ENCODE measurements at regions of chr19 and their contacts with region 1.

Region 1: GRCh38 chr19:49676690-49677231 is 310 bp upstream of the PRMT1 start:
- DNase-seq: peak; percentile 100
- ATAC-seq: peak; percentile 77
- H3K4me3 Mint-ChIP-seq: peak overlapping the region; percentile 94
- H3K27ac Mint-ChIP-seq: peak overlapping the region; percentile 99
- H3K4me1 Mint-ChIP-seq: peaks cover 39% of the 10 kb centered on the region
- H3K27me3 Mint-ChIP-seq: no peaks in the 10 kb centered on the region

Region 2: GRCh38 chr19:48255376-48256303 is 1421.1 kb before region 1 on chr19 and contains the start of gene CARD8:
- CTCF ChIA-PET with region 1: no interaction called
- POLR2A ChIA-PET with region 1: no interaction called
- intact Hi-C with region 1: loop called in 1 of 2 experiments (anchors 5 kb)
- DNase-seq: peak; percentile 89
- ATAC-seq: peak; percentile 89
- H3K4me3 Mint-ChIP-seq: peak within 1 kb of the TSS; percentile 92
- H3K27ac Mint-ChIP-seq: peak within 1 kb of the TSS; percentile 98
- H3K4me1 Mint-ChIP-seq: peaks cover 63% of the 10 kb centered on the region
- H3K27me3 Mint-ChIP-seq: no peaks in the 10 kb centered on the region
- total RNA-seq, gene CARD8: 109 to 118 TPM

Region 3: GRCh38 chr19:49443366-49444099 is 233.2 kb before region 1 on chr19:
- CTCF ChIA-PET with region 1: no interaction called
- POLR2A ChIA-PET with region 1: no interaction called
- intact Hi-C with region 1: loop called in 1 of 2 experiments (anchors 2 kb)
- DNase-seq: peak; percentile 97
- ATAC-seq: peak; percentile 91
- H3K4me3 Mint-ChIP-seq: peak overlapping the region; percentile 73
- H3K27ac Mint-ChIP-seq: peak overlapping the region; percentile 83
- H3K4me1 Mint-ChIP-seq: peaks cover 33% of the 10 kb centered on the region
- H3K27me3 Mint-ChIP-seq: peaks cover 37% of the 10 kb centered on the region

Region 4: GRCh38 chr19:49497047-49497788 is 179.5 kb before region 1 on chr19:
- CTCF ChIA-PET with region 1: interaction called, 5 read pairs
- POLR2A ChIA-PET with region 1: interaction called, 11 read pairs
- intact Hi-C with region 1: loop called (anchors 1 to 2 kb)
- DNase-seq: peak; percentile 86
- ATAC-seq: peak; percentile 5
- H3K4me3 Mint-ChIP-seq: peak overlapping the region; percentile 93
- H3K27ac Mint-ChIP-seq: peak overlapping the region; percentile 98
- H3K4me1 Mint-ChIP-seq: peaks cover 47% of the 10 kb centered on the region
- H3K27me3 Mint-ChIP-seq: no peaks in the 10 kb centered on the region

Region 5: DNA sequence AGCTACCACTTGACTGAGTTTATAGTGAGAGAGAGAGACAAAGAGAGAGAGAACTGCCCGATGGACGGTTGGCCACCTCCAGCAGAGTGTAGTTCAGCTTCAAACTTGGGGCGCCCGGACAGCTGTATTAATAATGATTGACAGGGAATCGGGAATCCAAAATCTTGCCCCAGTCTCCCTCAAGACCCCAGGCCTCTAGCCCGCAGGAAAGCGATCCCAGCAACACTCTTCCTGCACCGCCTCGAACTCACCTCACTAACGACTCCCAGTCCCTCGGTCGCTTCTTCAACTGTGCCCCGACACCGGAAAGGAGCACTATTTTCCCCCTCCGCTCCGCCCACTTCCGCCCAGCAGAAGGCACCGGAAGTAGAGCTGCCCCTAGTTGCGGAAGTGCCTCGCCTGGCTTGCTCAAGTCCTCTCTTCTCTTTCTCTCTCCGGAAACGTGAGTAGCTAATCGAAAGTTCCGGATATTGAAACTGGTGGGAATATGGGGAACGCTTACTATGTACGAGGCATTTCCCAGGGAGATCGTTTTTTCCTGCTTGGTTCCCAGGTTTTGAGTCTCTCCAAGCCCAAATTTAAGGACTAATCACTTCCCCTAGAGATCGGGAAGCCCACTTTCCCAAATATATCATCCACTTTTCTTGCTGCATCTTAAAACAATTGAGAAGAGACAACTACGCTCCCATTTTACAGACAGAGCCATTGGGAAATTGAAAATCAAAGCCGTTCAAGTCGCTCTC is 96.3 kb before region 1 on chr19 and contains the start of gene NOSIP:
- CTCF ChIA-PET with region 1: interaction called, 7 read pairs
- POLR2A ChIA-PET with region 1: no interaction called
- intact Hi-C with region 1: loop called in 1 of 2 experiments (anchors 1 kb)
- DNase-seq: peak; percentile 98
- ATAC-seq: peak; percentile 97
- H3K4me3 Mint-ChIP-seq: peak within 1 kb of the TSS; percentile 92
- H3K27ac Mint-ChIP-seq: peak within 1 kb of the TSS; percentile 89
- H3K4me1 Mint-ChIP-seq: peaks cover 34% of the 10 kb centered on the region
- H3K27me3 Mint-ChIP-seq: no peaks in the 10 kb centered on the region
- total RNA-seq, gene NOSIP: 71.4 to 73.1 TPM

Region 6: DNA sequence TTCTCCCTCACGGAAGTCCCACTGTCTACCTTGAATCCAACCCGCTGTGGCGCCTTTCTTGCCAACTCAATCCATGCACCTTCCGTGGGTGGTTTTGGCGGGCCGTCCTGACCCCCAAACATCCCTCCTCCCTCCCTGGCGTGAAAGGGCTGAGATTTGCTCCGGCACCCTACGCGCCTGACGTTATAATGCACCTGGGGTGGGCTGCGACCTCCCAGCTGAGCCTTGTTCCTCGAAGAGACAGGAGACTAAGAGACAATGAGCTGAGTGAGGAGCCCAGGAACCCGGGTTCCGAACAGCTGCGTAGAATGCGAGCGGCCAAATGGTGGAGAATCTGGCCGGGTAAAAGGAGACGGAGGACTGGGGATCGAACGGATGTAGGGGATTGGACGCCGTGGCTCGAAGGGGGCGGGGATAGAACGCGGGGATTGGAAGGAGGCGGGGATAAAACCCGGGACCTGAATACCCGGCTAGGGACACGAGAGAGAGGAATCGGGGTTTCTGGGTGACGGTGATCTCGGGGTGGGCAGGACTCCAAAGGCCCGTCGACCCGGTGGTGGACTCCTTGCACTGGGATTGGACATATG is 14.0 kb after region 1 on chr19 and contains the start of gene CPT1C:
- CTCF ChIA-PET with region 1: interaction called, 10 read pairs
- POLR2A ChIA-PET with region 1: interaction called, 3 read pairs
- intact Hi-C with region 1: no loop called
- DNase-seq: peak; percentile 77
- ATAC-seq: peak; percentile 72
- H3K4me3 Mint-ChIP-seq: peak within 1 kb of the TSS; percentile 62
- H3K27ac Mint-ChIP-seq: peak within 1 kb of the TSS; percentile 51
- H3K4me1 Mint-ChIP-seq: peaks cover 23% of the 10 kb centered on the region
- H3K27me3 Mint-ChIP-seq: peaks cover 16% of the 10 kb centered on the region
- total RNA-seq, gene CPT1C: 1.1 to 1.6 TPM

Region 7: DNA sequence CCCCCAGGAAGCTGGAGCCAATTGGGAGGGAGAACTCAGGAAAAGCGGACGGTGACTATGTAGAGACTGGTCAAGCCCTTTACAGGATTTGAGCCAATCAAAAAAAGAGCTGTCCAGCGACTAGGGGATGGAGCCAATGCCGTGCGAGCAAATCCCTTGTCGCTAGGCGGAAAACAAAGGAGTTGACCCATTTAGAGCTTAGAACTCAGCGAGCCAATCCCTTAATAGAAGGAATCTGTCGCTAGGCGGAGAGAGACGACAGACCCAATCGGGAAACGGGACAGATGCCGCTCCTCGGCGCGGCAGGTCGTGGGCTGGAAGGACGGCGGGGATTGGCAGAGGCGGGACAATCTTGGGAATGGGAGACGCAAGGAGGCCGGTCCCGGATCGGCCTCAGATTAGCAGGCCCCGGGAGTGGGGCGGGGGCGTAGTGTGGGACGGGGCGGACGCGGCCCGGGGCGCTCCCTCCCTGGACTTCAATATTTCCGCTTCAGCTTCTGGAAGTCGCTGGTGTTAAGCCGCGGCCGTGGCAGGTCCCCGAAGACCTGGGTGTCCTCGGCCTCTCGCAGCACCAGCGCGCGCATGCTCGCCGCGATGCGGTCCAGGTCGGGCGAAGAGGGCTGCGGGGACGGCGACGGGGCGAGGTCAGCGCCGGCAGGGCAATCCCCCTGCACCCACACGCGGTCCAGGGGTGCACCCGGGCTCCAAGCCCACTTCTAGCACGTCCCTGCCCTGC is 192.8 kb after region 1 on chr19:
- CTCF ChIA-PET with region 1: interaction called, 3 read pairs
- POLR2A ChIA-PET with region 1: no interaction called
- intact Hi-C with region 1: loop called (anchors 1 to 5 kb)
- DNase-seq: peak; percentile 94
- ATAC-seq: peak; percentile 87
- H3K4me3 Mint-ChIP-seq: no peak overlapping the region
- H3K27ac Mint-ChIP-seq: no peak overlapping the region
- H3K4me1 Mint-ChIP-seq: peaks cover 39% of the 10 kb centered on the region
- H3K27me3 Mint-ChIP-seq: no peaks in the 10 kb centered on the region

Measured in activated CD4-positive, alpha-beta T cell treated with anti-CD3 and anti-CD28 coated beads for 36 hours (primary cell).